Activated CD4-positive, alpha-beta memory T cell treated with anti-CD3 and anti-CD28 coated beads for 36 hours (primary cell): ENCODE measurements at regions of chr22 and their contacts with region 1.

Region 1: DNA sequence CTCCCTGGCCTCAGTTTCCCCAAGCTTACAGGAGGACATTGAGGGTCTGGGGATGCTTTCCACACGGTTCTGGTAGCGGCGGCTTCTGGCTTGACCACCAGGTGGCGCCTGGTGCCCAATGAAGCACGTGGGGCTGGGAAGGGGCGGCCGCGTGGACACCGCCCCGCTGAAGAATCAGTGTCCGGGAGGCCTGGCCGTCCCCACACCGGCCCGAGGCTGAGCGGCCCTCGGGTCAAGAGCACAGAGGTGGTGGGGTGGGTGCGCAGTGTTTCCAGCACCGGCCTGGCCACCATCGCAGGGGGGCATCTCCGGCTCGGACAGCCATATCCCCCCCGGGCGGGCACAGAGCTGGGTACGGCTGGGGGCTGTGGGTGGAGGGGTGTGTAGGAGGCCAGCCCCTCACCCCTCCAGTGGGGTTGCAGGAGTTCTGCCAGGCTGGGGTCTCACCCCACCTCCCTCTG is 27.8 kb upstream of the PPARA start:
- DNase-seq: peak; percentile 79
- H3K4me3 Mint-ChIP-seq: no peak overlapping the region
- H3K27ac Mint-ChIP-seq: no peak overlapping the region
- H3K4me1 Mint-ChIP-seq: no peaks in the 10 kb centered on the region
- H3K27me3 Mint-ChIP-seq: no peaks in the 10 kb centered on the region

Region 2: GRCh38 chr22:46309526-46310085 is 187.1 kb after region 1 on chr22:
- CTCF ChIA-PET with region 1: interaction called, 70 read pairs
- POLR2A ChIA-PET with region 1: no interaction called
- intact Hi-C with region 1: loop called (anchors 1 kb)
- DNase-seq: no peak
- H3K4me3 Mint-ChIP-seq: no peak overlapping the region
- H3K27ac Mint-ChIP-seq: no peak overlapping the region
- H3K4me1 Mint-ChIP-seq: peaks cover 3% of the 10 kb centered on the region
- H3K27me3 Mint-ChIP-seq: no peaks in the 10 kb centered on the region

Region 3: DNA sequence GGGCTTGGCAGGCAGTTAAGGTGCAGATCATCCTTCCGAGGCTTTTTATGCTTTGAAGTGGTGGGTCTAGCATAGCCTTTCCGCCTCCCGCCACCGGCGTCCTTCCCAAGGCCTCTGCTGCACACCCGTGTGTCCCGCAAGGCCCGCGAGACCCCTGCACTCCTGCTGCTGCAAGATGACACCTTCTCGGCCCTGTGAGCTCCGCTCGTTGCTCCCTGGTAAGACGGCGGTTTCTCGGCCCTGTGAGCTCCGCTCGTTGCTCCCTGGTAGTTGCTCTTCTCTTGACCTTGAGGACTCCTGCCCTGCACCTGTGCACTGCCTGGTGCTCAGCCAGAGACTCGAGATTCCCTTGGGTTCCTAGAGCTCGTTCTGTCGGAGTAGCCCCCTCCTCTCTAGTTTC is 195.1 kb after region 1 on chr22:
- CTCF ChIA-PET with region 1: interaction called, 70 read pairs
- POLR2A ChIA-PET with region 1: no interaction called
- intact Hi-C with region 1: loop called (anchors 1 kb)
- DNase-seq: no peak
- H3K4me3 Mint-ChIP-seq: no peak overlapping the region
- H3K27ac Mint-ChIP-seq: no peak overlapping the region
- H3K4me1 Mint-ChIP-seq: no peaks in the 10 kb centered on the region
- H3K27me3 Mint-ChIP-seq: no peaks in the 10 kb centered on the region

Region 4: GRCh38 chr22:46542011-46542985 is 419.8 kb after region 1 on chr22:
- CTCF ChIA-PET with region 1: interaction called, 11 read pairs
- POLR2A ChIA-PET with region 1: no interaction called
- intact Hi-C with region 1: loop called (anchors 2 kb)
- DNase-seq: peak; percentile 81
- H3K4me3 Mint-ChIP-seq: no peak overlapping the region
- H3K27ac Mint-ChIP-seq: no peak overlapping the region
- H3K4me1 Mint-ChIP-seq: peaks cover 14% of the 10 kb centered on the region
- H3K27me3 Mint-ChIP-seq: peaks cover 33% of the 10 kb centered on the region